ENCODE measurements at regions of chr5 and their contacts with region 1.

Region 1: DNA sequence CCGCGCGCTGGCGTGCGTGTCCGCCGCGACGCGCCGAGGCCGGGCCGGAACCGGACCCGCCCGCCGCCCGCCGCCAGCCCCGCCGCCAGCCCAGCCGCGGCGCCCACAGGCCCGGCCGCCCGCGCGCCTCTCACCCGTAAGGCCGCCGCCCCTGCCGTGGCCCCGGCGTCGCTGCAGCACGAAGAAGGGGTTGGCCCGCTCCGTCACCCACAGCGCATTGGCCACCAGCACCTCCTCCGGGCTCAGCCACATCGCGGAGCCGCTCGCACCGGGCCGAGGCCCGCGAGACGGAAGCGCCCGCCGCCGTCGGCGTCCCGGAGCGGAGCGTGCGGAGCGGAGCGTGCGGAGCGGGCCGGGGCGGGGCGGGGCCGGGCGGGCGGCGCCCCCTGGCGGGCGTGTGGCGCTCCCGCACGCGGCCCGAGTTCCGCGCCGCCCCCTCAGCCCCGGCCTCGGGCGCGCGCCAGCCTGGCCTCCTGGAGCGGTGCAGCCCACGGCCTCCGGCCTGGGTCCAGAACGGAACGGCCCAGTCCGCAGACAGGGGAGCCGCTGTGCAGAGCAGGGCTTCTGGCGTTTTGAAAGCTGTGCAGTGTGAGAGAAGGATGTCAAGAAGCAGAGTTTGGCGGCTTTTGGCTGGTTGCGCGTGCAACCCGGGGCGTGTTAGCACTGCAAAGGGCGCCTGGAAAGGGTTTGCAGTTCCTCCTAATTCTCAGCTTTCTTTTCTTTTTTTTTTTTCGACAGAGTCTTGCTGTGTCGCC is at the start of gene TBC1D9B:
- DNase-seq: peak; percentile 54 to 79
- ATAC-seq: peak; percentile 86 to 96 (median 90)
- H3K4me3 ChIP-seq: peak within 1 kb of the TSS; percentile 1 to 74 (median 65)
- H3K27ac ChIP-seq: peak within 1 kb of the TSS; percentile 23 to 83 (median 79)
- H3K4me1 ChIP-seq: peaks cover 7 to 28% (median 20%) of the 10 kb centered on the region in 9 donors
- H3K27me3 ChIP-seq: no peaks in the 10 kb centered on the region
- CTCF ChIP-seq: peak; percentile 28 to 76 (median 45)
- total RNA-seq, gene TBC1D9B: 26.0 to 52.1 (median 33.7) TPM

Region 2: GRCh38 chr5:179668391-179668790 is 239.4 kb before region 1 on chr5:
- intact Hi-C with region 1: loop called in 2 of 10 experiments (anchors 10 kb)
- DNase-seq: peak in 1 of 2 donors; percentile 14
- ATAC-seq: peak in 1 of 8 donors; percentile 22
- H3K4me3 ChIP-seq: no peak overlapping the region
- H3K27ac ChIP-seq: no peak overlapping the region
- H3K4me1 ChIP-seq: no peaks in the 10 kb centered on the region
- H3K27me3 ChIP-seq: no peaks in the 10 kb centered on the region
- CTCF ChIP-seq: peak in 8 of 9 donors; percentile 10 to 74 (median 52)

Region 3: DNA sequence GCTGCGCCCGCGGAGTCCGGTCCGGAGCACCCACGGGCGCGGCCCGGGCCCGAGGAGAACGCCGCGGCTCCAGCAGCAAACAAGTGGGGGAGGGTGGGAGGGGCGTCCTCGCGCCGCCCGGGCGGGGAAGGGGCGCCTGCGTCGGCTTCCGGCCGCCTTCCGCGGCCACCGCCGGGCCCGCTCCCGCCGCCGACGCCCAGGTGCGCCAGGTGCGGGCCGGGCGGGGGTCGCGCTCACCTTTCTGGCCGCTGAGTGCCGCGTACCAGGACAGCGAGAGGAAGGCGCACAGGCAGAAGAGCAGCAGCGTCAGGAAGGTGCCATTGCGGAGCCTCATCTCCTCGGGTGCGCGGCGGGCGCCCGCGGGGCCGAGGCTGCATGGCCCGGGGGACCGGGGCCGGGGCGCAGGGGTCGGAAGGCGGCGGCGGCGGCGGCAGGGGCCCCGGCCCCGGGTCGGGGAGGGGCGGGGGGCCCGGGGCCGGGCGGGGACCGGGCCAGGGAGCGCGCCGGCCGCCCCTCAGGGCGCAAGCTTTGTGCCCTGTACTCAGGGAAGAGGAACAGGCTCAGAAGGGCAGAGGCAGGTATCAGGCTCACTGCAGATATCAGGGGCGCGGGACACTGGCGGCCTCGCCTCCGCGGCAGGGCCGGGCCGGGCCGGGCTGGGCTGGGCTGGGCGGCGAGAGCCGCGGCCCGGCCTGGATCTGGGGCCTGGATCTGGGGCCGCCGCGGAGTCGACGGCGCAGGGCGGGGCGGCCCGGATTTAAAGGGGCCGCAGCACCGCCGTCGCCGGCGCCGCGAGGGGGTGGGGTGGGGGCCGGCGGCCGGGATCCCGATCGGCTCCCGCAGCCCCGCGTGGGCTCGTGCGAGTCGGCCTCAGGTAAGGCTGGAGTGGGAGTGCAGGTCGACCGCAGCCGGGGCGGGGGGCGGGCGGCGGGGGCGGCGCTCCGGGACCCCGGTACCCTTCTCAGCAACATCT is 101.2 kb before region 1 on chr5 and contains the start of gene MGAT4B:
- intact Hi-C with region 1: loop called in 3 of 10 experiments (anchors 5 kb)
- DNase-seq: peak; percentile 68 to 82
- ATAC-seq: peak; percentile 83 to 95 (median 88)
- H3K4me3 ChIP-seq: peak within 1 kb of the TSS; percentile 74 to 99 (median 96)
- H3K27ac ChIP-seq: peak within 1 kb of the TSS; percentile 51 to 99 (median 96)
- H3K4me1 ChIP-seq: peaks cover 15 to 52% (median 46%) of the 10 kb centered on the region in 9 donors
- H3K27me3 ChIP-seq: no peaks in the 10 kb centered on the region
- CTCF ChIP-seq: no peak
- total RNA-seq, gene MGAT4B: 88.6 to 123 (median 102) TPM

Region 4: DNA sequence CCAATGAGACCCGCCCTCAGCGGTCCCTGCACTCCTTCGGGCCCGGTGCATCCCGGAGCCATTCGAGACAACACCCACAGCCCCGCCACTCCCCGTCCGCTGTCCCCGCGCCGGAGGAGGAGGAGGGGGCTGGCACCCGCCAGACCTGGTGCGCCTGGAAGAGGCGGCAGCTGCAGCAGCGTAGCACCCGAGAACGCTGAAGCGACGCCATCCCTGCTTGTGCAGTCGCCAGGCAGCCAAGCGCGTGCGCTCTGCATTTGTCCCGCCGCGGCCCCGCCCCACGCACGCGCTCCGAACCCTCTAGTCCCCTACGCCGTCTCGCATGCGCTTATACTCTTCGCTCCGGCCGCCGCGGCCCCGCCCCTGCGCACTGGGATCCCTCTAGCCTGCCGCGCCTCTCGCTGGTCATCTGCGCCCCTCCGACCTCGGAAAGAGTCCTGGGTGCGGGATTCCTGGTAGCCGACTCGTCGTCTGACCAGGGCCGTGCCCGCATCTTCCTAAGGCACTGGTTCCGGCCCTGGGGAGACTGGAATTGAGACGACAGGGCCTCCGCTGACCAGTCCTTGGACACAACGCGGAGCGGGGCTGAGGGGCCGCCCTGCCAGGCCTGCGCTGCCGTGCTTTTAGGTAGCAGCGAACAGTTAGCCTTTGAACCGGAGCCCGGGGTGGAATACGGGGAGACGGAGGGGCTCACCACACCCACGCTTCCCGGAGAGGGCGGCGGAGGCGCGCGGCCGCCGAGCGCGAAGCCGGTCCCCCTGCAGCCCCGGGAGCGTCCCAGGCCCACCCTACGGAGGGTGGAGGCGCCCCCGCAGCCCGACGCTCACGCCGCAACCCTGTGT is 48.9 kb before region 1 on chr5 and contains the start of gene MRNIP:
- intact Hi-C with region 1: loop called in 2 of 10 experiments (anchors 5 kb)
- DNase-seq: peak; percentile 97 to 98
- ATAC-seq: peak; percentile 99 to 100 (median 99)
- H3K4me3 ChIP-seq: peak within 1 kb of the TSS; percentile 48 to 99 (median 86)
- H3K27ac ChIP-seq: peak within 1 kb of the TSS; percentile 82 to 96 (median 92)
- H3K4me1 ChIP-seq: peaks cover 0 to 30% (median 17%) of the 10 kb centered on the region in 9 donors
- H3K27me3 ChIP-seq: no peaks in the 10 kb centered on the region
- CTCF ChIP-seq: peak in 6 of 9 donors; percentile 5 to 48 (median 30)
- total RNA-seq, gene MRNIP: 6.6 to 14.4 (median 12.7) TPM

Region 5: GRCh38 chr5:180071531-180072255 is 163.9 kb after region 1 on chr5 and contains the start of gene RNF130:
- intact Hi-C with region 1: loop called in 2 of 10 experiments (anchors 5 kb)
- DNase-seq: peak; percentile 93 to 96
- ATAC-seq: peak; percentile 93 to 98 (median 98)
- H3K4me3 ChIP-seq: peak within 1 kb of the TSS; percentile 71 to 100 (median 94)
- H3K27ac ChIP-seq: peak within 1 kb of the TSS; percentile 92 to 100 (median 97)
- H3K4me1 ChIP-seq: peaks cover 0 to 40% (median 17%) of the 10 kb centered on the region in 9 donors
- H3K27me3 ChIP-seq: no peaks in the 10 kb centered on the region
- CTCF ChIP-seq: peak in 1 of 9 donors; percentile 2
- total RNA-seq, gene RNF130: 25.8 to 55.8 (median 34.5) TPM

Measured in heart right ventricle (tissue), 16 donors.